ENCODE measurements at regions of chr14 and their contacts with region 1.

Region 1: DNA sequence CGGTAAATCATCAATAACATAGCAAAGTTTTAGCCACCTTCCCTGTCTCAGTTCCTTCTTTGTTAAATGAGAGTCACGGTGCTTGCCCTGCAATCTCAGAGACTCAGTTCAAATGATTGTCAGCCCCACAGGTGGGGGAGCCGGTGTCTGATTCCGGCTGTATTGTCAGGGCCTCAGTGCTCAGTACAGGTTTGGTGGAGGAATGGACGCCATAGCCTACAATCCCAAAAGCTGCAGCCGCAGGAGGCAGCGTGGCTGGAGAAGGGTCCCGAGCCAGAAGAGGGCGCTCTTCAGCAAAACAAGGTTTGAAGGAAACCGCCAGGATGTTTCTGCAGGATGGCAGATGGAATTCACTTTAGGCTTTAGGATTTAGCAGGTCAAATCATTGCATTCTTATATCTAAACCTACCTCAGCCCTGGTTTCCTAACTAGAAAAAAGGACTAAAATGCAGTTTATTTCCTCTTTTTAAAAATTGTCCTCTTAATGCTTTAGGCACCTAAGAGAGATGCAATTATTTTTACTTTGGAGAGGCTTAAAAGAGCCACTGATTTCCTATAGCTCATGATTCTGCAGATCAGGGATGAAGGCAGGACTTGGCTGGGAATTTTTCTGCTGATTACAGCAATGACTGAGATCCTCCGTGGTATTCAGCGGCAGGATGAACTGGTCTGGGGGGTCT is 29.2 kb downstream of the FOS start:
- DNase-seq: peak; percentile 83 to 93 (median 90)
- H3K4me3 ChIP-seq: no peak overlapping the region
- H3K27ac ChIP-seq: no peak overlapping the region
- H3K4me1 ChIP-seq: no peaks in the 10 kb centered on the region
- H3K27me3 ChIP-seq: no peaks in the 10 kb centered on the region
- CTCF ChIP-seq: peak; percentile 40 to 87 (median 79)
- EP300 ChIP-seq: no peak
- POLR2A ChIP-seq: no peak

Region 2: GRCh38 chr14:74945823-74946682 is 361.8 kb before region 1 on chr14:
- intact Hi-C with region 1: loop called in 1 of 4 experiments (anchors 10 kb)
- DNase-seq: peak; percentile 68 to 82 (median 81)
- H3K4me3 ChIP-seq: no peak overlapping the region
- H3K27ac ChIP-seq: no peak overlapping the region
- H3K4me1 ChIP-seq: peaks cover 3% of the 10 kb centered on the region
- H3K27me3 ChIP-seq: no peaks in the 10 kb centered on the region
- CTCF ChIP-seq: peak; percentile 65 to 88 (median 71)
- EP300 ChIP-seq: no peak
- POLR2A ChIP-seq: no peak

Region 3: GRCh38 chr14:75132382-75133086 is 175.3 kb before region 1 on chr14:
- intact Hi-C with region 1: loop called (anchors 2 to 5 kb)
- DNase-seq: peak in 1 of 5 donors; percentile 61
- H3K4me3 ChIP-seq: no peak overlapping the region
- H3K27ac ChIP-seq: peak overlapping the region in 1 of 2 donors; percentile 28
- H3K4me1 ChIP-seq: peaks cover 5% of the 10 kb centered on the region
- H3K27me3 ChIP-seq: no peaks in the 10 kb centered on the region
- CTCF ChIP-seq: peak; percentile 53 to 91 (median 90)
- EP300 ChIP-seq: no peak
- POLR2A ChIP-seq: no peak

Region 4: DNA sequence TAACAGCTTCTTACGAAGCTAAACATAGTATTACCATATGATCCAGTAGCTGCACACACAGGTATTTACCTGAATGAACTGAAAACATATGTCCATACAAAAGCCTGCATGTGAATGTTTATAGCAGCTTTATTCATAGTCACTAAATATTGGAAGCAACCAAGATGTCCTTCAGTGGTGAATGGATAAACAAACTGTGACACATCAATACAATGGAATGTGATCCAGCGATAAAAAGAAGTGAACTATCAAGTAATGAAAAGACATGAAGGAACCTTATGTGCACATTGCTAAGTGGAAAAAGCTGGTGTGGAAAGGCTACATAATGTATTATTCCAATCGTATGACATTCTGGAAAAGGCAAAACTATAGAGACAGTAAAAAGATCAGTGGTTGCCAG is 81.8 kb after region 1 on chr14:
- intact Hi-C with region 1: no loop called
- DNase-seq: no peak
- H3K4me3 ChIP-seq: no peak overlapping the region
- H3K27ac ChIP-seq: no peak overlapping the region
- H3K4me1 ChIP-seq: no peaks in the 10 kb centered on the region
- H3K27me3 ChIP-seq: no peaks in the 10 kb centered on the region
- CTCF ChIP-seq: no peak
- EP300 ChIP-seq: no peak
- POLR2A ChIP-seq: no peak

Region 5: GRCh38 chr14:75427482-75428229 is 119.8 kb after region 1 on chr14 and contains the start of gene JDP2:
- intact Hi-C with region 1: loop called in 1 of 4 experiments (anchors 10 kb)
- DNase-seq: peak; percentile 91 to 96 (median 94)
- H3K4me3 ChIP-seq: peak within 1 kb of the TSS; percentile 62
- H3K27ac ChIP-seq: peak within 1 kb of the TSS; percentile 61 to 82
- H3K4me1 ChIP-seq: peaks cover 8% of the 10 kb centered on the region
- H3K27me3 ChIP-seq: no peaks in the 10 kb centered on the region
- CTCF ChIP-seq: peak in 1 of 3 donors; percentile 32
- EP300 ChIP-seq: no peak
- POLR2A ChIP-seq: peak; percentile 63
- total RNA-seq, gene JDP2: 19.0 to 89.9 (median 26.8) TPM

Region 6: DNA sequence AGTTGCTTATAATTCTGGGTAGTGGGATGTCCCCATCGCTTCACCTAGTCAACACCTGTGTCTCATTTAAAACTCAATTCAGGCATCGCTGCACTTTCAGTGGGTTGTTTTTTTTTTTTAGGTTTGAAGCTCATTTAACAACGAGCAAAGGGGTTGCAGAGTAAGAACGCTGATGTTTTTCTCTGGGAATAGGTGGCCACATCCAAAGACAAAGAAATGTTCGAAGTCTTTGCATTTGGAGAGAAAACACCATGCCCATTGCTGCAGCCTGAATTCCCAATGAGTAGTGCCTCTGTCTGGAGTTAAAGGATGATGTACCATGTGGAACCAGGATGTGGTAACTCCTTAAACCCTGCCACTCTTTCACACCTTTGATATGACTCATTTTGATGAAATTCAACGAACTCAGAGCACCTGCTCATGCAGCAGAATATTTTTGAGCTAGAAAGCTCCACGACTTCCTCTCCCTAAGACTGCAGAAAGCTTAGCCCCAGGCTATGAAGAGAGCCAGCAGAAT is 179.4 kb after region 1 on chr14:
- intact Hi-C with region 1: loop called (anchors 2 to 5 kb)
- DNase-seq: no peak
- H3K4me3 ChIP-seq: no peak overlapping the region
- H3K27ac ChIP-seq: no peak overlapping the region
- H3K4me1 ChIP-seq: no peaks in the 10 kb centered on the region
- H3K27me3 ChIP-seq: no peaks in the 10 kb centered on the region
- CTCF ChIP-seq: no peak
- EP300 ChIP-seq: no peak
- POLR2A ChIP-seq: no peak